Left cardiac atrium (tissue), 4 donors: ENCODE measurements at regions of chr10 and their contacts with region 1.

Region 1: GRCh38 chr10:98262571-98262970 is 5.4 kb downstream of the LOXL4 start:
- DNase-seq: no peak
- ATAC-seq: peak; percentile 64 to 69

Region 2: DNA sequence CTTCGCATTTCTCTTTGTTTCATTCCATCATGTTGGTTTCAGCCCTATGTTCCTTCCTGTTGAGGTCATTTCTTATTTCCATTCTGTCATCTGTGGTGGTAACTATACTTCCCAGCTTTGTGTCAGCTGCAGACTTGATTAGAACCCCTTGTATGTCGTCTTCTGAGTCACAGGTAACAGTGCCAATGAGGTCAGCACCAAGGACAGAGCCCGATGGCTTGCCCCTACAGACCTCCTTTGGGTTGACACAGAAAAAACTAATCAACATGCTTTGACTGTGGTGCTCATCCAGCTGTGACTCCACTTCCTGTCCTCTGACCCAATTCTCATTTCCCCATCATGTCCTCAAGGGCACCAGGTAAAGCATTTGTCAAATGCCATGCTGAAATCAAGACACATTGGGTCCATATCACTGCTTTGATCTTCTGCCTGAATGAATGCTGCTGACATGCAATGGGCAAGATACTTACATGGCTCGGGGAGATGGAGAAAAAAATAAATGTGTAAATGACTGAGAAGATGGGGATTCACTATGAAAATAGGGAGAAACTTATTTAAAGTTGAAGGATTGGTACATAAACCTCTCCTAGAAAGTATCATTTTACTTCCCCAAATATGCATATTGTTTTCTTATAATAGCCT is 206.6 kb before region 1 on chr10:
- intact Hi-C with region 1: no loop called
- DNase-seq: no peak
- ATAC-seq: no peak

Region 3: DNA sequence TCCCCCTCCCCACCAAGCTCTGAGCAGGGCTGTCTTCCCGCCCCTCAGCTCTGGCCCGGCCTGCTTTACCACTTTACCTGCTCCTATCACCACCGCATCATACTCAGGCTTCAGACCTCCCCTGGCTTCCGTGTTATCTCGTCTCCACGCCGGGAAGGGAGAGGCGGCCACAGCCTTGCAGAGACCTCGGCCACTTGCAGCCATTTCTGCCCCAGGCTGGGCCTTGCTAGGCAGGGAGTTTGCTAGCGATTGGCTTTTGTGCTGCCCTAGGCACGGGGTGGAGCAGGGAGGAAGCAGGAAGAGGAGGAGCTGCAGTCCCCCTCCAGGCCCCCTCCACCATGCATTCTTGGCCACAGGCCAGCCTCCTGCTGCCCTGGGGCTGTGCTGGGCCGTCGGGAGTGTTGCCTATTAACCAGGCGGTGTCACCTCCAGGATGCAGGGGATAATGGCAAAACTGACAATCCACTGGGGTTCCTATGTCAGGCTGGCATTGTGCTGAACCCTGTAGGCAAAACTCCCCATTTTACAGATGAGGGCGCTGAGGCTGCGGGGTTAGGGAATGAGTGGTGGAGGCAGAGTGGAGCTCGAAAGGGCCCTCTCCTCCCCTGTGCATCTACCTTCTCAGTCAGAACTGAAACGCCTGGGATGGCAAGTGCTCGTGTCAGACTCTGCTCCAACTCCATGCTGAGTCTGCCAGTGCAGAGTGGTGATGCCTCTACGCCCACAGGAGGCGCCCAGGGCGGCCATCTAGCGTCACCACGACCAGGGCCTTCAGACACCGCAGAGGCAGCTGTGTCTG is 152.6 kb after region 1 on chr10 and contains the start of gene PYROXD2:
- intact Hi-C with region 1: loop called in 1 of 2 experiments (anchors 10 kb)
- DNase-seq: peak; percentile 93
- ATAC-seq: peak; percentile 97 to 98
- total RNA-seq, gene PYROXD2: 6.1 to 6.6 TPM